Mammary epithelial cell (primary cell): ENCODE measurements at regions of chr5 and their contacts with region 1.

Region 1: GRCh38 chr5:98898743-98899142 is 30.1 kb downstream of the CHD1 start:
- DNase-seq: no peak
- H3K4me3 ChIP-seq: no peak overlapping the region
- H3K27ac ChIP-seq: no peak overlapping the region
- H3K4me1 ChIP-seq: no peaks in the 10 kb centered on the region
- H3K27me3 ChIP-seq: no peaks in the 10 kb centered on the region
- CTCF ChIP-seq: no peak

Region 2: GRCh38 chr5:98865690-98866089 is 33.1 kb before region 1 on chr5:
- CTCF ChIA-PET with region 1: no interaction called
- dilution Hi-C with region 1: no loop called
- in situ Hi-C with region 1: no loop called
- intact Hi-C with region 1: loop called (anchors 5 kb)
- DNase-seq: no peak
- H3K4me3 ChIP-seq: no peak overlapping the region
- H3K27ac ChIP-seq: no peak overlapping the region
- H3K4me1 ChIP-seq: no peaks in the 10 kb centered on the region
- H3K27me3 ChIP-seq: no peaks in the 10 kb centered on the region
- CTCF ChIP-seq: no peak